ENCODE measurements at regions of chr13 and their contacts with region 1.

Region 1: GRCh38 chr13:79423801-79424642 is 18.0 kb upstream of the RBM26 start:
- DNase-seq: no peak
- ATAC-seq: no peak
- H3K4me3 Mint-ChIP-seq: no peak overlapping the region
- H3K27ac Mint-ChIP-seq: no peak overlapping the region
- H3K4me1 Mint-ChIP-seq: peaks cover 11% of the 10 kb centered on the region
- H3K27me3 Mint-ChIP-seq: peaks cover 1% of the 10 kb centered on the region

Region 2: DNA sequence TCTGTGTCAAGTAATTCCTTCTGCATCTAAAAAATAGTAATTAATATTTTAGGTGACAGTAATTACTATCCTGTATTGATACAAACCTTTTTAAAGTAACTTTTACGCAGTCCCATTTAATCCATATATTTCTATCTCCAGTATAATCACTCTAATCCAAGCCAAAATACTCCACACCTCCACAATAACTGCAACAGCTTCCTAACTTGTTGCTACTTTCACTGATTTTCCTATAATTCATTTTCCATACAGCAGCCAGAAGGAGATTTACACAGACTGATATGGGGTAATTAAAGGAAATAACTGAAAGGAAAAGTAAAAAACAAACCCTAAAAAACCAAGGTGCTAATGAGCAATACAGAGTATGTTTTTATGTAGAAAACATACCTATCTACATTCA is 82.8 kb before region 1 on chr13:
- CTCF ChIA-PET with region 1: no interaction called
- POLR2A ChIA-PET with region 1: no interaction called
- DNase-seq: no peak
- ATAC-seq: no peak
- H3K4me3 Mint-ChIP-seq: no peak overlapping the region
- H3K27ac Mint-ChIP-seq: peak overlapping the region; percentile 17
- H3K4me1 Mint-ChIP-seq: no peaks in the 10 kb centered on the region
- H3K27me3 Mint-ChIP-seq: no peaks in the 10 kb centered on the region

Region 3: GRCh38 chr13:79413521-79413920 is 10.5 kb before region 1 on chr13:
- CTCF ChIA-PET with region 1: interaction called, 18 read pairs
- POLR2A ChIA-PET with region 1: no interaction called
- DNase-seq: no peak
- ATAC-seq: no peak
- H3K4me3 Mint-ChIP-seq: no peak overlapping the region
- H3K27ac Mint-ChIP-seq: no peak overlapping the region
- H3K4me1 Mint-ChIP-seq: peaks cover 8% of the 10 kb centered on the region
- H3K27me3 Mint-ChIP-seq: no peaks in the 10 kb centered on the region

Region 4: GRCh38 chr13:79451500-79451962 is 27.5 kb after region 1 on chr13:
- CTCF ChIA-PET with region 1: interaction called, 19 read pairs
- POLR2A ChIA-PET with region 1: interaction called, 5 read pairs
- DNase-seq: peak; percentile 93
- ATAC-seq: peak; percentile 99
- H3K4me3 Mint-ChIP-seq: peak overlapping the region; percentile 59
- H3K27ac Mint-ChIP-seq: peak overlapping the region; percentile 82
- H3K4me1 Mint-ChIP-seq: peaks cover 62% of the 10 kb centered on the region
- H3K27me3 Mint-ChIP-seq: no peaks in the 10 kb centered on the region

Region 5: DNA sequence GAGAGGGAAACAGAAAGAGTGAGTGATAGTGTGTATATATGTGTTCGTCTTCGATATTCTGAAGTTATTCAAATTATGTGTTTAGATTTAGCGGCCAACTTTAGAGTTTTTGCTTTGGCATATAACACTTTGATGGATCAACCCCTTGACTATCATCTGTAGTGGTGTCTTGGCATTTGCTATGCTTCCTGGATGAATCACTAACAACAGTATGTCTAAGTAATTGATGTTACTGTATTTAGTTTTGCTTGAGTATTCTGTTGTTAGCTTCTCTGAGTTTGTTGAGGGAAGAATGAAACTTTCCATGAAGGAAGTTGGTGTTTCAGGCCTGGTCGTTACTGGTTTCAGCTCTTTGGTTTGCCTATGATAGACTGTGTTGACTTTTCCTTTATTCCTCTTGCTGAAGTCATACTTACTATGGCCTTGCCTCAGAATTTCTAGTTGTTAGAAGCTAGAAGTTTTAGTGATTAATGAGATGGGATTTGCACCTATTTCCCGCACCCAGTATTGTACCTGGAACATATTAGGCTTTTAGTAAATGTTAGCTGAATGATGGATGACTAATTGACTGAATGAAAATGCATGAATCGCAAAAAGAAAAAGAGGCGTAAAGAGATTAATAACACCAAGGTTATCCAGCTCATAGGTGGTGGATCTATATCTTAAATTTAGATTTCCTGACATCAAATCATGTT is 77.7 kb after region 1 on chr13:
- CTCF ChIA-PET with region 1: interaction called, 11 read pairs
- POLR2A ChIA-PET with region 1: interaction called, 4 read pairs
- DNase-seq: no peak
- ATAC-seq: no peak
- H3K4me3 Mint-ChIP-seq: no peak overlapping the region
- H3K27ac Mint-ChIP-seq: no peak overlapping the region
- H3K4me1 Mint-ChIP-seq: peaks cover 54% of the 10 kb centered on the region
- H3K27me3 Mint-ChIP-seq: no peaks in the 10 kb centered on the region

Region 6: DNA sequence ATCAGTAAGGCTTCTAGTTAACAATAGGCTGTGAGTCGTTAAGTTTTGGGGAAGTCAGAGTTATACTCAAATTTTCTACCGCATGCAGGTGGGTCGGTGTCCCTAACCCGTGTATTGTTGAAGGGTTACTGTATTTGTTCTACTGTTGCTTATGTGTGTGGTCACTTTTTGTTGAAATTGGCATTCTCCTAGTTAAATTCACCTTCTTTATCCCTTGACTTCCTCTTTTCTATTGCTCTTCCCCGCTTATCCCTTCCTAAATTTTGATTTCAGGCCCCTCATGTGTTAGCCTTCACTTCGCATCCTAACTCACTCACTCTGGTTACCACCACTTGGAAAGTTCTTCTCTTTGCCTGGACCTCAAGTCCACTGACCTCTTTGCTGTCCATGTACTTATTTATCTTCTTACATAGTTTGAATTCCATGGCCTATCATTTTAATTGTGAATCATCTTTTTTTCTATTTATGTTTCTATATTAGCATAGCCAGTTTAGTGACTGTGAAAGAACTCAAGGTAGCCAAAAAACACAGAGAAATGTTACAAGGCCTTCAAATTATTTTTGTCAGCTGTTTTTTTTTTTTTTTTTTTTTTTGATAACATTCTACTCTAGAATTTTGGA is 109.9 kb after region 1 on chr13:
- CTCF ChIA-PET with region 1: interaction called, 198 read pairs
- POLR2A ChIA-PET with region 1: interaction called, 3 read pairs
- DNase-seq: no peak
- ATAC-seq: no peak
- H3K4me3 Mint-ChIP-seq: no peak overlapping the region
- H3K27ac Mint-ChIP-seq: no peak overlapping the region
- H3K4me1 Mint-ChIP-seq: peaks cover 30% of the 10 kb centered on the region
- H3K27me3 Mint-ChIP-seq: no peaks in the 10 kb centered on the region

Region 7: GRCh38 chr13:79679334-79679733 is 255.3 kb after region 1 on chr13:
- CTCF ChIA-PET with region 1: interaction called, 12 read pairs
- POLR2A ChIA-PET with region 1: no interaction called
- DNase-seq: peak; percentile 63
- ATAC-seq: peak; percentile 53
- H3K4me3 Mint-ChIP-seq: no peak overlapping the region
- H3K27ac Mint-ChIP-seq: no peak overlapping the region
- H3K4me1 Mint-ChIP-seq: no peaks in the 10 kb centered on the region
- H3K27me3 Mint-ChIP-seq: peaks cover 3% of the 10 kb centered on the region

Measured in activated CD8-positive, alpha-beta T cell treated with anti-CD3 and anti-CD28 coated beads, Interleukin-2, amount 10 ng/mL, durations not matched to agents 7 days and 5 days (primary cell).